HCT116 (cell line): ENCODE measurements at regions of chr7 and their contacts with region 1.

Region 1: GRCh38 chr7:135170274-135170997 is at the start of gene CYREN:
- DNase-seq: peak; percentile 88
- ATAC-seq: peak; percentile 88
- H3K4me3 ChIP-seq: peak within 1 kb of the TSS; percentile 81 to 83
- H3K27ac ChIP-seq: peak within 1 kb of the TSS; percentile 92
- H3K4me1 ChIP-seq: peaks cover 0 to 18% of the 10 kb centered on the region in 2 experiments; a peak in 2 of 4 replicates
- H3K27me3 ChIP-seq: no peaks in the 10 kb centered on the region
- CTCF ChIP-seq: peak; percentile 45 to 90 (median 52)
- POLR2A ChIP-seq: peak; percentile 36
- RAD21 ChIP-seq: peak; percentile 84
- total RNA-seq, gene CYREN: 54.5 TPM

Region 2: GRCh38 chr7:134891262-134891695 is 279.2 kb before region 1 on chr7:
- CTCF ChIA-PET with region 1: no interaction called
- POLR2A ChIA-PET with region 1: no interaction called
- RAD21 ChIA-PET with region 1: no interaction called
- intact Hi-C with region 1: loop called (anchors 10 kb)
- DNase-seq: peak; percentile 94
- ATAC-seq: peak; percentile 98
- H3K4me3 ChIP-seq: peak overlapping the region; percentile 69 to 75
- H3K27ac ChIP-seq: peak overlapping the region; percentile 60
- H3K4me1 ChIP-seq: peaks cover 10 to 22% of the 10 kb centered on the region in 2 experiments; a peak in 3 of 4 replicates
- H3K27me3 ChIP-seq: no peaks in the 10 kb centered on the region
- CTCF ChIP-seq: no peak
- POLR2A ChIP-seq: peak; percentile 21
- RAD21 ChIP-seq: peak; percentile 15; the same call in 1 of the 2 replicates

Region 3: GRCh38 chr7:134986363-134987251 is 183.8 kb before region 1 on chr7 and contains the start of gene AGBL3:
- CTCF ChIA-PET with region 1: interaction called, 18 read pairs
- POLR2A ChIA-PET with region 1: interaction called, 4 read pairs
- RAD21 ChIA-PET with region 1: interaction called in 1 of 2 experiments, 3 read pairs
- intact Hi-C with region 1: loop called (anchors 1 kb)
- DNase-seq: peak; percentile 95
- ATAC-seq: peak; percentile 97
- H3K4me3 ChIP-seq: peak within 1 kb of the TSS; percentile 76 to 83
- H3K27ac ChIP-seq: peak within 1 kb of the TSS; percentile 75
- H3K4me1 ChIP-seq: peaks cover 0 to 16% of the 10 kb centered on the region in 2 experiments; a peak in 2 of 4 replicates
- H3K27me3 ChIP-seq: no peaks in the 10 kb centered on the region
- CTCF ChIP-seq: peak; percentile 51 to 76 (median 58); a peak in 5 of 6 replicates
- POLR2A ChIP-seq: peak; percentile 73
- RAD21 ChIP-seq: peak; percentile 50
- total RNA-seq, gene AGBL3: 1.9 TPM

Region 4: GRCh38 chr7:135160098-135160857 is 10.2 kb before region 1 on chr7:
- CTCF ChIA-PET with region 1: interaction called, 25 read pairs
- POLR2A ChIA-PET with region 1: interaction called, 12 read pairs
- RAD21 ChIA-PET with region 1: no interaction called
- intact Hi-C with region 1: no loop called
- DNase-seq: no peak
- ATAC-seq: peak; percentile 30; the same call in 1 of the 2 replicates
- H3K4me3 ChIP-seq: no peak overlapping the region
- H3K27ac ChIP-seq: peak overlapping the region; percentile 50
- H3K4me1 ChIP-seq: peaks cover 18 to 23% of the 10 kb centered on the region in 2 experiments
- H3K27me3 ChIP-seq: no peaks in the 10 kb centered on the region
- CTCF ChIP-seq: no peak
- POLR2A ChIP-seq: no peak
- RAD21 ChIP-seq: 0 out of 2 replicates have a peak, but pooled peaks have one; percentile 5

Region 5: GRCh38 chr7:135645296-135645904 is 475.0 kb after region 1 on chr7:
- CTCF ChIA-PET with region 1: no interaction called
- POLR2A ChIA-PET with region 1: no interaction called
- RAD21 ChIA-PET with region 1: no interaction called
- intact Hi-C with region 1: no loop called
- DNase-seq: peak; percentile 40
- ATAC-seq: peak; percentile 87
- H3K4me3 ChIP-seq: no peak overlapping the region
- H3K27ac ChIP-seq: no peak overlapping the region
- H3K4me1 ChIP-seq: no peaks in the 10 kb centered on the region
- H3K27me3 ChIP-seq: no peaks in the 10 kb centered on the region
- CTCF ChIP-seq: peak; percentile 52 to 76 (median 68); a peak in 5 of 6 replicates
- POLR2A ChIP-seq: no peak
- RAD21 ChIP-seq: peak; percentile 65